Dendritic cell treated with granulocyte-macrophage colony-stimulating factor and Interleukin-4, amounts not matched to agents 40 ng/mL and 50 ng/mL, for 4 days (primary cell): ENCODE measurements at regions of chr15 and their contacts with region 1.

Region 1: DNA sequence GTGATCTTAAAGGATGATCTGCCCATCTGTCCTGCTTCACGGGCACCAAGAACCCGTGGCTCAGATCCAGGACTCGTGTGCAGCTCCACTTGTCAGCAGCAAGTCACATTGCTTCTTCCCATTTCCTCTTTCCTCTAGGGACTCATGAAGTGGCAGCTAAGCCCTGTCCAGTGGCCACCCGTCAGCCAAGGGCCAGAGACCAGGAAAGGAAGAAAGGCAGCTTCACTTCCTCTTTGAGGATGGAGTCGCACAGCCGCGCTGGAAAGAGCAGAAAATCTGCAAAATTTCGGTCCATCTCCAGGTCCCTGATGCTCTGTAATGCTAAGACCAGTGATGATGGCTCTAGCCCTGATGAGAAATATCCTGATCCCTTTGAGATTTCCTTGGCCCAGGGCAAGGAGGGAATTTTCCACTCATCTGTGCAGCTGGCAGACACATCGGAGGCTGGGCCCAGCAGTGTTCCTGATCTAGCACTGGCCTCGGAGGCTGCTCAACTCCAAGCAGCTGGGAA is 28.5 kb downstream of the IL16 start:
- H3K4me3 Mint-ChIP-seq: no peak overlapping the region
- H3K27ac Mint-ChIP-seq: peak overlapping the region; percentile 77
- H3K4me1 Mint-ChIP-seq: peaks cover 46% of the 10 kb centered on the region
- H3K27me3 Mint-ChIP-seq: peaks cover 11% of the 10 kb centered on the region

Region 2: GRCh38 chr15:81182756-81183438 is 42.3 kb before region 1 on chr15:
- intact Hi-C with region 1: loop called (anchors 5 kb)
- H3K4me3 Mint-ChIP-seq: peak overlapping the region; percentile 5
- H3K27ac Mint-ChIP-seq: peak overlapping the region; percentile 64
- H3K4me1 Mint-ChIP-seq: peaks cover 35% of the 10 kb centered on the region
- H3K27me3 Mint-ChIP-seq: peaks cover 31% of the 10 kb centered on the region